ENCODE measurements at regions of chrX and their contacts with region 1.

Region 1: DNA sequence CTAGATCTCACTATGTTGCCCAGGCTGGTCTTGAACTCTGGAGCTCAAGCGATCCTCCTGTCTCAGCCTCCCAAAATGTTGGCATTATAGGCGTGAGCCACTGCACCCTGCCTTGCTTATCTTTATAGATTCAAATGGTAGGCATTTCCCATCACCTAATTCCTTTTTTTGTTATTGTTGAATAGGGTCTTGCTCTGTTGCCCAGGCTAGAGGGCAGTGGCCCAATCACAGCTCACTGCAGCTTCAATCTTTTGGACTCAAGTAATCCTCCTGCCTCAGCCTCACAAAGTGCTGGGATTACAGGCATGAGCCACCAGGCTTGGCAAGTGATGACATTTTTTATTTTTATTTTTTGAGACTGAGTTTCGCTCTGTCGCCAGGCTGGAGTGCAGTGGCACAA is 16.7 kb upstream of the WDR45 start:
- DNase-seq: no peak
- H3K4me3 ChIP-seq: no peak overlapping the region
- H3K27ac ChIP-seq: no peak overlapping the region
- H3K4me1 ChIP-seq: no peaks in the 10 kb centered on the region
- H3K27me3 ChIP-seq: no peaks in the 10 kb centered on the region
- CTCF ChIP-seq: no peak
- POLR2A ChIP-seq: no peak

Region 2: DNA sequence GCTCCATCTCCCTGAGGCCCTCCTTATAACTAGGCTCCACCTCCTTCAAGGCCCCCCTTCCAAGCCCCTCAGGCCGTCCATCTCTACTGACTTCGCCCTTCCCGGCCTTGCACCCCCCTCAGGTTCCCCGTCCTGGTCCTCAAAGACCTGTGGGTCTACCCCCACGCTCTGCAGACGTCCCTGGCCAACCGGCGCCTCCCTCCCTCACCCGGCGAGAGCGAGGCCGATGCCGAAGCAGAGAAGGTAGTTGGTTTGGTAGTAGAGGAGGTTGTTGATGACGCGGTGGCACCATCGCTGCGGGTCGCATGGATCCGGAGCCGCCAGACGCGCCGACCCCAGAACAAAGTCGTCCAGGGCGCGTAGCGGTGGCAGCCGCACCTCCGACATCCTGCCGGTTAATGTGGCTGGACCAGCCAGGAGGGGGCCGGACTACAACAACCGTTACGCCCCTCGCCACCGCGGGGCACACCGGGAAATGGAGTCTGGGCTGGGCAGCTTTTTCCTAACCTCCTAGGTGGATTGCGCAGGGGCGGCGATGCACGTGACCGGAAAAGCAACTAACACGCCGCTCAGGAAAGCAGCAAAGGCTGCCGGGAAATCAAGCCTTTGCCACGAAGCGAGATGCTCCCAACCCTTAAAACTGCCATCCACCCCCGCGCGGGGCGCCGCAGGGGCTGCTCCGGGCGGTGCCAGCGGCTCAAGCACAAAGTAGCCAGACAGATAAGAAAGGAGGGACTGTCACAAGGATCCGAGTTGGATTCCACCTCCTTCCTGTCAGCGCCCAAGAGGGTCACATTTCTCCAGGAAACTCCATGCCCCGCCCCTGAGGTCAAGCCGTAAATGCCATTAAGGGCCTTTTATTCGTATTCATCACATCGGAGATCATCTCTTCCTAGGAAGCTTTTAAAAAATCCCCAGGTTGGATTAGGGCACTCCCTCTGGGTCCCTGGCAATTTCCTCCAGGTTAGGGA is 22.5 kb before region 1 on chrX and contains the start of gene PRAF2:
- intact Hi-C with region 1: no loop called
- DNase-seq: peak; percentile 89 to 91
- H3K4me3 ChIP-seq: peak within 1 kb of the TSS; percentile 46 to 72 (median 56)
- H3K27ac ChIP-seq: peak within 1 kb of the TSS; percentile 50 to 78
- H3K4me1 ChIP-seq: no peaks in the 10 kb centered on the region
- H3K27me3 ChIP-seq: peaks cover 0 to 20% of the 10 kb centered on the region in 2 donors
- CTCF ChIP-seq: no peak
- POLR2A ChIP-seq: no peak
- total RNA-seq, gene PRAF2: 5.9 to 18.4 (median 6.6) TPM

Region 3: DNA sequence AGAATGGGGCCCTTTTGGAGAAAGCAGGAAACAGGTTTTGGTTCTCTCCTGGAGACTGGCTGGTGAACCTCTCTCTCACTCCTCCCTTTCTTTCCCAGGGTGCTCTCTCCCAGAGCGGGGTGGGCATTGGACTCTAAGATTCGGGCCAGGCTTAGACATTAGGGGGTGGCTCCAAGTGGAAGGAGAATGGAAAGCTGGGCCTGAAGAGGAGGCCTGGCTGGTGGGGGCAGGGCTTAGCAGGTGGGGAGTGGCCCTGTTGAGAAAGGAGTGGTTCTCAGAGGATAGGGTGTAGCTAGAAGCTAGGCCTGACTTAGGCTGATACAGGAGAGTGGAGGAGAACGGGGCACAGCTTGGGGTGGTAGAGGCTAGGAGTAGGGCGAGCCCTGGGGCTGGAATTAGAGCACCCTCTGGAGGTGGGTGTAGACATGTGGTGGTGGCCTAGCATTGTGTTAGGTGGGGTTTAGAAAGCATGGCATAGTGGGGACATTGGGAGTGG is 81.0 kb after region 1 on chrX:
- intact Hi-C with region 1: loop called (anchors 5 kb)
- DNase-seq: no peak
- H3K4me3 ChIP-seq: no peak overlapping the region
- H3K27ac ChIP-seq: peak overlapping the region in 1 of 2 donors; percentile 32
- H3K4me1 ChIP-seq: no peaks in the 10 kb centered on the region
- H3K27me3 ChIP-seq: peaks cover 0 to 14% of the 10 kb centered on the region in 2 donors
- CTCF ChIP-seq: no peak
- POLR2A ChIP-seq: no peak

Region 4: GRCh38 chrX:49958727-49959485 is 862.5 kb after region 1 on chrX:
- intact Hi-C with region 1: no loop called
- DNase-seq: no peak
- H3K4me3 ChIP-seq: no peak overlapping the region
- H3K27ac ChIP-seq: no peak overlapping the region
- H3K4me1 ChIP-seq: no peaks in the 10 kb centered on the region
- H3K27me3 ChIP-seq: peaks cover 0 to 53% of the 10 kb centered on the region in 2 donors
- CTCF ChIP-seq: no peak
- POLR2A ChIP-seq: no peak